ENCODE measurements at regions of chrX and their contacts with region 1.

Region 1: GRCh38 chrX:85111347-85111746 is 107.7 kb downstream of the APOOL start:
- DNase-seq: no peak
- ATAC-seq: no peak

Region 2: DNA sequence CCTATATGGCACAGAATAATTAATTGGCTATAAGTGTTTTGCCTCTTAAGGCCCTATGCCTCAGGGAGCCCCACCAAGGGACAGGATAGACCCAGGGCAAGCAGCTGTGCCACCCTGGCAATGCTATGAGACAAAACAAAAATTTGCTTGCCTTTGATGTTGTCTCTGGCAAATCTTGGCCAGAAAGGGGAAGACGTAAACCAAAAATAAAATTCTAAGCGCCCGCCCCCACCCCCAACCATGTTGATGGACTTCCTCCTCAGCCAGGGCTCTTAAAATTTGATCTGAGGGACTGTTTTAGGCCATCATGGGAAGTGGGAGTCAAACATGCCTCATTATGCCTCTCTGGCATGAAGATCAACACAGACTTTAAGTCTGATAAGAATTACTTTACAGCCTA is 238.2 kb before region 1 on chrX:
- intact Hi-C with region 1: no loop called
- DNase-seq: no peak
- ATAC-seq: no peak

Region 3: GRCh38 chrX:85544609-85545008 is 433.3 kb after region 1 on chrX:
- intact Hi-C with region 1: loop called (anchors 5 kb)
- DNase-seq: no peak
- ATAC-seq: no peak